ENCODE measurements at regions of chr11 and their contacts with region 1.

Region 1: DNA sequence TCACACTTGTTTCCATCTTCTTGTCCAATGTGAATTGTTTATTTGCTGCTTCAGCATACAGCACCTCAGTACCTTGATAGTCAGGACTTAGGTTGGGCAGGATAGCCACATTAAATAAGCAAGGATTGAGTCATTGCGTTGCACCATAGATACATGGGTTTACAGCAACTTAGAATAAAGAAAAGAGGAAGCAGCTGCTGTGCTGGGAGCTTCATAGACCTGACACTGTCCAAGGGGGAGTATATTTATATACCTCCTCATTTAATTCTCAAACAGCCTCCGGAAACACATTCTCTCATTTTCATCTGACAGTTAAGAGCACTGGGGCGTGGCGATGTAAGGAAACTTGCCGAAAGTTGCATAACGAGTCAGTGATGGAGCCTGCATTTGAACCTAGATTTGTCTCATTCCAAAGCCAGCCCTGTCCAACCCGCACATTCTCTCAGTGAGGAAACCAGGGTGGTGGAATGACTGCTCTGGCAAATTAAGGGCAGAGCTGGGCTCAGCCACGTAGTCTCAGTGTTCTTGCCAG is 42.2 kb downstream of the UBASH3B start:
- DNase-seq: peak; percentile 98
- H3K4me3 ChIP-seq: peak overlapping the region; percentile 64
- H3K27ac ChIP-seq: peak overlapping the region; percentile 99
- H3K4me1 ChIP-seq: peaks cover 96% of the 10 kb centered on the region
- CTCF ChIP-seq: no peak

Region 2: DNA sequence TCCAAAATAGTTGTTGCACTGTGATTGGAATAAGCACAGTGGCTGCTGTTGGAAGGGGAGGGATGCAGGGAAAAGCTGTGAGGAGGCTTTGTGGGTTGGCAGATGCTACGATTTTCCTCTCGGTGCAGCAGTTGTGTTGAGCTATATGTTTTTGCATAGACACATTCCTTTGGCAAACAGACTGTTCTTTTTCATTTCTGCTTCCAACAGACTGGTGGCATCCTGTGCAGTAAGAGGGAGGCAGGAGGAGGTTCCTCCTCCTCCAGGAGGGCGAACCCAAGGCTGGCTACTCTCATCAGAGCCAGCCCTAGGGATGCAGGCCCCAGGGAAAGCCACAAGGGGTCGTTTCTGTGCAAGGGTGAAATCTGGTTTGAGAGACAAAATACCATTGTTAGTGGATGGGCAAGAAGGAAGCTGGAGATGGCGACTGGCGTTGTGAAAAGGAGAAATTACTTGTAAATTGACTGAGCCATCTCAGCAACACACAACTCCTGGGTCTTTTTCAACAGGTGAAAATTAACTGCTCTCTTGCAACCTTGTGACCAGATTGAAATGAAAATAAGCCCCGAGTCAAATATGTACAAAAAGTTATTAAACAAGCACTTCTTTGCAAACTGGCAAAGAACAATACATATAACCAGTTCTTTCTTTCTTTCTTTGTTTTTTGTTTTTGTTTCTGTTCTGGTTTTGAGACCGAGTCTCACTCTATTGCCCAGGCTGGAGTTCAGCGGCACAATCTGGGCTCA is 68.7 kb before region 1 on chr11:
- CTCF ChIA-PET with region 1: interaction called, 3 read pairs
- POLR2A ChIA-PET with region 1: interaction called, 6 read pairs
- intact Hi-C with region 1: loop called (anchors 2 kb)
- DNase-seq: peak; percentile 85
- H3K4me3 ChIP-seq: no peak overlapping the region
- H3K27ac ChIP-seq: no peak overlapping the region
- H3K4me1 ChIP-seq: peaks cover 10% of the 10 kb centered on the region
- CTCF ChIP-seq: peak; percentile 94

Region 3: GRCh38 chr11:122668562-122669090 is 29.1 kb before region 1 on chr11:
- CTCF ChIA-PET with region 1: interaction called, 6 read pairs
- POLR2A ChIA-PET with region 1: interaction called, 175 read pairs
- intact Hi-C with region 1: loop called (anchors 1 kb)
- DNase-seq: peak; percentile 87
- H3K4me3 ChIP-seq: peak overlapping the region; percentile 47
- H3K27ac ChIP-seq: peak overlapping the region; percentile 93
- H3K4me1 ChIP-seq: peaks cover 99% of the 10 kb centered on the region
- CTCF ChIP-seq: no peak

Region 4: DNA sequence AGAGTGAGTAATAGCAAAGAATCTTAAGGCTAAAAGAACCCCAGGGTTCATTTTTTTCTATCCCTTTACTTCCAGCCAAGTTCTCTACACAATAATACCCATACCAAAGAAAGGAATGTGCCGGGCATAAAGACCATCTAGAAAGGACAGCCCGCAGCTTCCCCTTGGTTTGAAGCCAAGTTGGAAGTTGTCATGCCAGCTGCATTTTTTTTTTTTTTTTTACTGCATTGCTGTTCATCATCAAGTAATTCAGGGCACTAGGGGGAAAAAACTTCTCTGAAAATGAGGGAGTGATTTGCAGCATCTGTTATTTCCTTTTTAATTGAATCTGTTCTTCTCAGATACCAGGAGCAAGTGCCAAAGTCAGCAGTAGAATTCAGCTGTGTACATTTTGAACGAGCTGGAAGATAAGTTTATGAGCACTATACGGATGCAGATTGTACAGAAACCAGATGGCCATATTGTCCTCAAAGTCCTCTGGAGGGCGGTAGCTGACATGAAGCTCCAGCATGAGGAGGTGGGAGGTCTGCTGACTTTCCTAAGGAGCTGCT is 14.2 kb after region 1 on chr11:
- CTCF ChIA-PET with region 1: interaction called, 7 read pairs
- POLR2A ChIA-PET with region 1: interaction called, 77 read pairs
- intact Hi-C with region 1: loop called (anchors 1 kb)
- DNase-seq: peak; percentile 45
- H3K4me3 ChIP-seq: no peak overlapping the region
- H3K27ac ChIP-seq: peak overlapping the region; percentile 35
- H3K4me1 ChIP-seq: peaks cover 78% of the 10 kb centered on the region
- CTCF ChIP-seq: peak; percentile 58

Region 5: DNA sequence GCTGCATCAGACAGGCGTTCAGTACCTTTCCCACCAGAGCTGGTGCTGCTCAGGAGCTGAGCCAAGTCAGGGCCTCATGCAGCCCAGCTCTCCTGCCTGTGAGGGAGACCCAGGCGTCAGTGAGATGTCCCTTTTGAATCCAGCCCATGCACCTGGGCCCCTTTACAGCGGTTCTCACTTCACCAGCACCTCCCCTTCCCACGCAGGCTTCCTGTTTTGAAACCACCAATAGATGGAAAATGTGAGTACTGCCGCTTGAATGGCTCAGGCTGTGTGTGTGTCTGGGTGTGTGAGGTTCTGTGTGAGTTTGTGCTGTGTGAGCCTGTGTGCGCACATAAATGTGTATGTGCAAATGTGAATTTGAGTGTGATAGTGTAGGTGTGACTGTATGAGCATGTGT is 46.2 kb after region 1 on chr11:
- CTCF ChIA-PET with region 1: interaction called, 5 read pairs
- POLR2A ChIA-PET with region 1: interaction called, 88 read pairs
- intact Hi-C with region 1: loop called (anchors 1 kb)
- DNase-seq: peak; percentile 92
- H3K4me3 ChIP-seq: peak overlapping the region; percentile 53
- H3K27ac ChIP-seq: peak overlapping the region; percentile 85
- H3K4me1 ChIP-seq: peaks cover 89% of the 10 kb centered on the region
- CTCF ChIP-seq: no peak

Measured in OCI-LY7 (cell line).